Caco-2 (cell line): ENCODE measurements at regions of chr6 and their contacts with region 1.

Region 1: GRCh38 chr6:35452186-35453090 is at the start of gene FANCE:
- DNase-seq: peak; percentile 96 to 98
- H3K4me3 ChIP-seq: peak within 1 kb of the TSS; percentile 85
- H3K4me3 Mint-ChIP-seq: peak within 1 kb of the TSS; percentile 74
- H3K27ac Mint-ChIP-seq: no peak within 1 kb of the TSS
- H3K4me1 ChIP-seq: no peaks in the 10 kb centered on the region
- H3K4me1 Mint-ChIP-seq: peaks cover 7% of the 10 kb centered on the region
- H3K27me3 ChIP-seq: no peaks in the 10 kb centered on the region
- H3K27me3 Mint-ChIP-seq: no peaks in the 10 kb centered on the region
- CTCF ChIP-seq: no peak
- total RNA-seq, gene FANCE: 10.5 and 12.4 TPM in 2 replicates

Region 2: DNA sequence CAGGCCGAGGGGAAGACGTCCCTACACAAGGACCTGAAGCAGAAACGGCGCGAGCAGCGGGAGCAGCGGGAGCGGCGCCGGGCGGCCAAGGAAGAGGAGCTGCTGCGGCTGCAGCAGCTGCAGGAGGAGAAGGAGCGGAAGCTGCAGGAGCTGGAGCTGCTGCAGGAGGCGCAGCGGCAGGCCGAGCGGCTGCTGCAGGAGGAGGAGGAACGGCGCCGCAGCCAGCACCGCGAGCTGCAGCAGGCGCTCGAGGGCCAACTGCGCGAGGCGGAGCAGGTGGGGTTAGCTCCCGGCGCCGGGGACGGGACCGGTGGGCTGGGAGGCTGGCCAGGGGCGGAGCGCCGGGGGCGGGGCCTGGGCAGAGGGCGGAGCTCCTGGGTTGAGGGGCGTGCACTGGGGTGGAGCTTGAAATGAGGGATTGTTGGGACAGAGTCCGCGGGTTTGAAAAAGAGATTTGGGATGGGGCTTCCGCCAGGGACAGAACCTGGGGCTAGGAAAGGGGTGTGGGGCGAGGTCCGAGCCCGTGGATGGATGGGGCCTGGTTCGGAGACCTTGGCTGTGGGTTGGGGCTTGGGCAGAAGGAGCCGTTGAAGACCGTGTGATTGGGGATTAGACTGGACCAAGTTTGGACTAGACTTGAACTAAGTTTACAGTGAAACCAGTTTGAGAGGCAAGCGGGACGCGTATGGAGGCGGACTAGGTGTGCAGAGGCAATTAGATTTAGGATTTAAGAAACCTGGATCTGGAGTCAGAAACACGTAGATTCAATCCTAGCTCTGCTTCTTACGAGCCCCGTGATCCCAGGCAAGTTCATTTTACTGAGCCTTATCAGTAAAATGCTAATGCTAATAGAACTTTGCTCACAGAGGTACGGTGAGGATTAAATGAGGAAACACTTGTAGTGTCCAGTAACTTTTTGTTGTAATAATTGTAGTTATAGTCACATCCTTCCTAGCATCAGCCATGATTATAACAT is 134.0 kb before region 1 on chr6:
- CTCF ChIA-PET with region 1: interaction called, 11 read pairs
- POLR2A ChIA-PET with region 1: interaction called, 3 read pairs
- intact Hi-C with region 1: no loop called
- DNase-seq: peak; percentile 90 to 98
- H3K4me3 ChIP-seq: peak overlapping the region; percentile 59
- H3K4me3 Mint-ChIP-seq: peak overlapping the region; percentile 98
- H3K27ac Mint-ChIP-seq: peak overlapping the region; percentile 92
- H3K4me1 ChIP-seq: peaks cover 14% of the 10 kb centered on the region
- H3K4me1 Mint-ChIP-seq: peaks cover 15% of the 10 kb centered on the region
- H3K27me3 ChIP-seq: no peaks in the 10 kb centered on the region
- H3K27me3 Mint-ChIP-seq: no peaks in the 10 kb centered on the region
- CTCF ChIP-seq: peak in 1 of 2 experiments; percentile 3

Region 3: GRCh38 chr6:35370124-35370741 is 82.2 kb before region 1 on chr6:
- CTCF ChIA-PET with region 1: interaction called, 3 read pairs
- POLR2A ChIA-PET with region 1: no interaction called
- intact Hi-C with region 1: loop called (anchors 2 kb)
- DNase-seq: no peak
- H3K4me3 ChIP-seq: no peak overlapping the region
- H3K4me3 Mint-ChIP-seq: no peak overlapping the region
- H3K27ac Mint-ChIP-seq: peak overlapping the region; percentile 43
- H3K4me1 ChIP-seq: peaks cover 19% of the 10 kb centered on the region
- H3K4me1 Mint-ChIP-seq: peaks cover 11% of the 10 kb centered on the region
- H3K27me3 ChIP-seq: no peaks in the 10 kb centered on the region
- H3K27me3 Mint-ChIP-seq: no peaks in the 10 kb centered on the region
- CTCF ChIP-seq: no peak

Region 4: DNA sequence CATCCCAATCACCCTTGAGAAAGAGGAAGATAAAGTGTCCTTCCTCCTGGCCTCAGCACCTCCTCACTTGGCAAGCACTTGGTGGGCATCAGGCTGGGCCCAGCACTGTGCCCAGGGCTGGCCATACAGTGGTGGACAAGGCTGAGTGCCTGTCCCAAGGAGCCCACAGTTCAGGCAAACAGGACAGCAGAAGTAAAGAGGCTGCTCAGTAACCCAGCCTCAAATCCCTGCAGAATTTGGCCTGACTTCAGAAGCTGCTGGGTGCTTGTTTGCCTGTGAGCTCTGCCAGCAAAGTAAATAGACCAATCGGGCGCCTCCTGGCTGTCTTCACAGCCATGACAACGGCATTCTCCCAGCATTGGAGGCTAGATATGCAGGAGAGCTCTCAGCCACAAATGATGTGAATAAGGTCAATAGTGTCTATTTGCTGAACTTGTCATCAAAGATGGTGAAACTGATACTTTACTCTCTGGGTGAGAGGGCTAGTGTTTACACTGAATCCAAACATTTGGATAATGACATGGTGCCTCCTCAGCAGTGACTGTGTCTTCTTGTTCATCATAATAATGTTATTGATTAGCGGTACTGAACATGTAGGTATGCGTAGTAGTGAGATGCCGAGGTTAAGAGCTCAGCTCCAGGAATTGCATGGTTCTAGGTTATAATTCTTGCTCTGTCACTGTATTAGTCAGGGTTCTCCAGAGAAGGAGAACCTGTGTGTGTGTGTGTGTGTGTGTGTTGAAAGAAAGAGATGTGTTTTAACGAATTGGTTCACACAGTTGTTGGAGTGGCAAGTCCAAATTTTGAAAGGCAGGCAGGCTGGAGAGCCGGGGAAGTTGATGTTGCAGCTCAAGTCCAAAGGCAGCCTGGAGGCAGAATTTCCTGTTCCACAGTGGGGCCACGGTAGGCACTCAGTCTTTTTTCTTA is 37.1 kb before region 1 on chr6:
- CTCF ChIA-PET with region 1: interaction called, 11 read pairs
- POLR2A ChIA-PET with region 1: interaction called, 4 read pairs
- intact Hi-C with region 1: loop called (anchors 1 kb)
- DNase-seq: peak; percentile 72 to 78
- H3K4me3 ChIP-seq: no peak overlapping the region
- H3K4me3 Mint-ChIP-seq: no peak overlapping the region
- H3K27ac Mint-ChIP-seq: no peak overlapping the region
- H3K4me1 ChIP-seq: peaks cover 7% of the 10 kb centered on the region; the same call in 1 of the 2 replicates
- H3K4me1 Mint-ChIP-seq: peaks cover 16% of the 10 kb centered on the region
- H3K27me3 ChIP-seq: no peaks in the 10 kb centered on the region
- H3K27me3 Mint-ChIP-seq: no peaks in the 10 kb centered on the region
- CTCF ChIP-seq: peak; percentile 36 to 73